ENCODE measurements at regions of chr6 and their contacts with region 1.

Region 1: DNA sequence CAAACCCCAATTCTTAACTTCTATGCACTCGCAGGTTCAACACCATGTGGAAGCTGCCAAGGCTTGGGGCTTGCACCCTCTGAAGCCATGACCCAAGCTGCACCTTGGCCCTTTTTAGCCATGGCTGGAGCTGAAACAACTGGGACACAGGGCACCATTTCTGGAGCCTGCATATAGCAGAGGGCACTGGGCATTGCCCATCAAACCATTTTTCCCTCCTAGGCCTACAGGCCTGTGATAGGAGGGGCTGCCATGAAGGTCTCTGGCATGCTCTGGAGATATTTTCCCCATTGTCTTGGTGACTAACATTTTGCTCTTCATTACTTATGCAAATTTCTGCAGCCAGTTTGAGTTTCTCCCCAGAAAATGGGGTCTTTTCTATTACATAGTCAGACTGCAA is 484.7 kb downstream of the EPHA7 start:
- DNase-seq: no peak
- ATAC-seq: no peak
- H3K4me3 ChIP-seq: no peak overlapping the region
- H3K27ac ChIP-seq: no peak overlapping the region
- H3K4me1 ChIP-seq: no peaks in the 10 kb centered on the region
- H3K27me3 ChIP-seq: no peaks in the 10 kb centered on the region
- CTCF ChIP-seq: no peak
- EP300 ChIP-seq: no peak
- POLR2A ChIP-seq: no peak
- RAD21 ChIP-seq: no peak

Region 2: GRCh38 chr6:92922216-92922806 is 12.3 kb before region 1 on chr6:
- CTCF ChIA-PET with region 1: no interaction called
- POLR2A ChIA-PET with region 1: no interaction called
- in situ Hi-C with region 1: no loop called
- intact Hi-C with region 1: no loop called
- DNase-seq: no peak
- ATAC-seq: no peak
- H3K4me3 ChIP-seq: no peak overlapping the region
- H3K27ac ChIP-seq: no peak overlapping the region
- H3K4me1 ChIP-seq: no peaks in the 10 kb centered on the region
- H3K27me3 ChIP-seq: no peaks in the 10 kb centered on the region
- CTCF ChIP-seq: no peak
- EP300 ChIP-seq: no peak
- POLR2A ChIP-seq: no peak
- RAD21 ChIP-seq: no peak

Region 3: GRCh38 chr6:92979281-92979680 is 44.7 kb after region 1 on chr6:
- CTCF ChIA-PET with region 1: no interaction called
- POLR2A ChIA-PET with region 1: no interaction called
- in situ Hi-C with region 1: no loop called
- intact Hi-C with region 1: loop called (anchors 1 kb)
- DNase-seq: no peak
- ATAC-seq: no peak
- H3K4me3 ChIP-seq: no peak overlapping the region
- H3K27ac ChIP-seq: no peak overlapping the region
- H3K4me1 ChIP-seq: no peaks in the 10 kb centered on the region
- H3K27me3 ChIP-seq: no peaks in the 10 kb centered on the region
- CTCF ChIP-seq: no peak
- EP300 ChIP-seq: no peak
- POLR2A ChIP-seq: no peak
- RAD21 ChIP-seq: no peak

Region 4: GRCh38 chr6:93069856-93070255 is 135.2 kb after region 1 on chr6:
- CTCF ChIA-PET with region 1: no interaction called
- POLR2A ChIA-PET with region 1: no interaction called
- in situ Hi-C with region 1: no loop called
- intact Hi-C with region 1: no loop called
- DNase-seq: no peak
- ATAC-seq: no peak
- H3K4me3 ChIP-seq: no peak overlapping the region
- H3K27ac ChIP-seq: no peak overlapping the region
- H3K4me1 ChIP-seq: no peaks in the 10 kb centered on the region
- H3K27me3 ChIP-seq: no peaks in the 10 kb centered on the region
- CTCF ChIP-seq: no peak
- EP300 ChIP-seq: no peak
- POLR2A ChIP-seq: no peak
- RAD21 ChIP-seq: no peak